Activated CD4-positive, alpha-beta T cell treated with anti-CD3 and anti-CD28 coated beads, Interleukin-2, amount 10 ng/mL, durations not matched to agents 24 days and 14 days (primary cell): ENCODE measurements at regions of chr10 and their contacts with region 1.

Region 1: DNA sequence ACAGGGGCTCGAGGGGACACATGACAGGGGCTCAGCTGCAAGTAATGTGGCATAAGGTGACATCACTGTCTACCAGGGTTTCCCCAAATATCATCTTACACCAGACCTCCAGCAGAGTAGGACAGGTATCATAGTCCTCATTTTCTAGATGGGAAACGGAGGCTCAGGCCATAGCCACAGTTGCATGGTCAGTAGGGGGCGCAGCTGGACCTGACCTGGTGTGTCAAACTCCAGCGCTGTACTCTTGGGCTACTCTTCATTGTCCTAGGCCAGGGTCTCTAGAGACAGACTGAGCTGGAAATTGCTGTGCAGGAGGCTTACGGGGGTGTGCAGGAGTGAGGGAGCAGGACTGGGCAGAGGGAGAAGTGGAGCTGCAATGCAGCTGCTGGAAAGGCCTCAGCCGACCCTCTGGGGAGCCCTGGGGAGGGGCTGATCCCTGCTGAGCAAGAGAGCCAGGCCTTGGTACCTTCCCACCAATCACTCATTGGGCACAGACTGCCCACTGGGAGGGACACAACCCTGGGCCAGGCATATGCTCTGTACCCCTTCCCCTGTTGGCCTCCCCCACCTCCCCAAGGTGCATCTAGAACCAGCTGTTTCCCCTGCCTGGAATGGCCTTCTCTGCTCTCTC is 89.9 kb downstream of the CDH23 start:
- DNase-seq: peak; percentile 77
- H3K4me3 Mint-ChIP-seq: no peak overlapping the region
- H3K27ac Mint-ChIP-seq: no peak overlapping the region
- H3K4me1 Mint-ChIP-seq: no peaks in the 10 kb centered on the region
- H3K27me3 Mint-ChIP-seq: no peaks in the 10 kb centered on the region

Region 2: GRCh38 chr10:71218046-71218650 is 268.5 kb before region 1 on chr10:
- intact Hi-C with region 1: no loop called
- DNase-seq: no peak
- H3K4me3 Mint-ChIP-seq: peak overlapping the region; percentile 70
- H3K27ac Mint-ChIP-seq: no peak overlapping the region
- H3K4me1 Mint-ChIP-seq: peaks cover 8% of the 10 kb centered on the region
- H3K27me3 Mint-ChIP-seq: peaks cover 67% of the 10 kb centered on the region

Region 3: DNA sequence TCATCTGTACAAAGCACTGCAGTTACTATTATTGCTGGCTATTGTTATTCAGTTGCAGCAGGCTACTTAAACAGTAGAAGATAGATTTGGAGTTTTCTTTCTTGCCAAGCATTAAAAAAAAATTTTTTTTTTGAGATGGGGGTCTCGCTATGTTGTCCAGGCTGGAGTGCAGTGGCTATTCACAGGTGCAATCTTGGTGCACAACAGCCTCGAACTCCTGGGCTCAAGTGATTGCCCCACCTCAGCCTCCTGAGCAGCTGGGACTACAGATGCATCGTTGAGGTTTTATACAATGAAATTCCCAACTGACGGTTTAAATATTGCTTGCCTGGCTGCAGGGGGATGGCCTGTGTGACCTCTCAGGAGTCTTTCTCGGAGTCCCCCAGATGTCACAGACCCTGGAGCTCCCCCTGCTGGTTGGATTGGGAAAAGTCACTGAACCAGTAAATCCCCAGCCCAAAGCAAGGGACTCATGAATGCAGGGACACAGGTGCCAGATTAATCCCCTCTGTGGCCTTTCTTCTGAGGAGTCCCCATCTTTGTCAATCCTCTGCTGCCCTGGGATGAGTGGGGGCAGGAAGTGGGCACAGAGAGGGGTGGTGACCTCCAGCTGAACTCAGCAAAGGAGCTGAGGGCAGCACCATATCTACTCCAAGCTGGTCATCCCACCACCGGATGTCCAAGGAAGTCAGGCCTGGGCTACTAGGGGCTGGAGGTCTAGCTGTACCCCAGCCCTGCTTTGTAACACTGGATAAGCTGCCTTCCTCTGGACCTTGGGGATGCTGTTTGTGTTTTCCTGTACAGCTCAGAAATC is 83.4 kb after region 1 on chr10:
- intact Hi-C with region 1: loop called (anchors 1 kb)
- DNase-seq: peak; percentile 93
- H3K4me3 Mint-ChIP-seq: no peak overlapping the region
- H3K27ac Mint-ChIP-seq: no peak overlapping the region
- H3K4me1 Mint-ChIP-seq: peaks cover 3% of the 10 kb centered on the region
- H3K27me3 Mint-ChIP-seq: no peaks in the 10 kb centered on the region